HEK293 (cell line): ENCODE measurements at regions of chr1 and their contacts with region 1.

Region 1: DNA sequence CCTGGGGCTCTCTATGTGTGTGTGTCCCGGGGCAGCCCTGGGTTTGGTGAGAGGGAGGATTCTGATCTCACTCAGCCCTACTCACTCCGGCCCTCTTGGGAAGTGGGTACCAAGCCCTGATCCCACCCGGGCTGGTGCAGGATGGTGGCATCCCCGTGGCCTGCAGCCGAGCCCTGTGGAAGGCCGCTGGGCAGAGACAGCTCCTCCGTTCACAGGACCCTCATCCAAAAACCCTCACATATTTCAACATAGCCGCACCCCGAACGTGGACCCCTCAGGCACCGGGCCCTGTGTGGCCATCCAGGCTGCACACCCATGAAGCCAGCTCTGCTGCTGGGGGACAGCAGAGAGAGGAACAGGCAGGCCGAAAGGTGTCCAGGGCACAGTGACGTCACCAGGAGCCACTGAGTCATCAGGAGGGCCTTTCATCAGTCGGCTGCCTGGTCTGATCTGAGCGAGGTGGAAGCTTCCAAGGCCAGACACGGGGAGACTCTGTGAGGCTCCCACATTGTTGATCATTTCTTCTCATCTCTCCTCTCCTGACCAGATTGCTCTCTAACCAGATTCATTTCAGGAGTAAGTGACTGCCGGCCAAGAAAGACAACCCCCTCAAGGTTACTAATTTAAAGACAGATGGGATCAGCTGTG is 16.2 kb upstream of the GPR157 start:
- H3K4me3 ChIP-seq: no peak overlapping the region
- H3K27ac ChIP-seq: no peak overlapping the region
- H3K4me1 ChIP-seq: no peaks in the 10 kb centered on the region
- CTCF ChIP-seq: no peak

Region 2: GRCh38 chr1:9028921-9029705 is 116.0 kb before region 1 on chr1:
- CTCF ChIA-PET with region 1: no interaction called
- POLR2A ChIA-PET with region 1: no interaction called
- H3K4me3 ChIP-seq: no peak overlapping the region
- H3K27ac ChIP-seq: no peak overlapping the region
- H3K4me1 ChIP-seq: no peaks in the 10 kb centered on the region
- CTCF ChIP-seq: no peak

Region 3: GRCh38 chr1:9133870-9134585 is 11.1 kb before region 1 on chr1:
- CTCF ChIA-PET with region 1: interaction called, 26 read pairs
- POLR2A ChIA-PET with region 1: interaction called, 4 read pairs
- H3K4me3 ChIP-seq: no peak overlapping the region
- H3K27ac ChIP-seq: no peak overlapping the region
- H3K4me1 ChIP-seq: no peaks in the 10 kb centered on the region
- CTCF ChIP-seq: no peak

Region 4: DNA sequence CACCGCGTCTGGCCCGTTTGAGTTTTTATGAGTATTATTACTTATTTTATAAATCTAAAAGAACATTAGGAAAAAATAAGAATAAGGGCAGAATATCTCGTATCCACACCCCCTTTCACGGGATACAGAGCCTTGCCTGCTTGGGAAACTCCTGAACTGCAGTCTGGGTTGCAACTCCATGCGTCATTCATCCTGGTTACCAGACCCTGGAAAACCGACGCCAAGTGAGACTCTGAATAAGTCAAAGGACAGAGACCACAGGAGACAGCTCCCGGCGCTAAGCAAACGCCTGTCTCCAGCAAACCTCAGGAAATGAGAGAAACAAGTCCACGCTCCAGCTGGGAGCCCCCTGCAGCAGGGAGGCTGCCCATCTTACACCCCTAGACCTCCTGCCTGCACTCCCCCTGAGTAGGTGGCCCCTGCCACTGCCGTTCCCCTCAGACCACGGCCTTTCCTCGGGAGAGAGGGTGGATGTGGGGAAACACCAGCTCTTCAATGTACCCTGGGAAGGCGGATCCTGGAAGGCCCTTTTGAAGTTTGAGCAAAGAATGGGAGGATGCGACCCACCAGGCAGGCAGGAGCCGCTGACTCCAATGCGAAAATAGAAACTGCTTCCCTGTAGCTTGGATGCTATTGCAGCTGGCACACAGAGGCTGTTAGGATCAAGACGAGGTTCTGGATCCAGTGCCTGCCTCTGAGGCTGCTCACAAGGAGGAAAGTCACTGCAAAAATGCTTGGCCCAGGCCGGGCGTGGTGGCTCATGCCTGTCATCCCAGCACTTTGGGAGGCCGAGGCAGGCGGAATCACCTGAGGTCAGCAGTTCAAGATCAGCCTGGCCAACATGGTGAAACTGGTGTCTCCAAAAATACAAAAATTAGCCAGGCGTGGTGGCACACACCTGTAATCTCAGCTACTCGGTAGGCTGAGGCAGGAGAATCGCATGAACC is 21.4 kb after region 1 on chr1:
- CTCF ChIA-PET with region 1: interaction called, 13 read pairs
- POLR2A ChIA-PET with region 1: interaction called, 3 read pairs
- H3K4me3 ChIP-seq: no peak overlapping the region
- H3K27ac ChIP-seq: no peak overlapping the region
- H3K4me1 ChIP-seq: peaks cover 17% of the 10 kb centered on the region
- CTCF ChIP-seq: no peak

Region 5: GRCh38 chr1:9190234-9190633 is 45.1 kb after region 1 on chr1:
- CTCF ChIA-PET with region 1: interaction called, 57 read pairs
- POLR2A ChIA-PET with region 1: no interaction called
- H3K4me3 ChIP-seq: no peak overlapping the region
- H3K27ac ChIP-seq: no peak overlapping the region
- H3K4me1 ChIP-seq: 0 out of 2 replicates have a peak, but pooled peaks cover 2% of the 10 kb centered on the region
- CTCF ChIP-seq: no peak

Region 6: GRCh38 chr1:9201401-9202239 is 56.5 kb after region 1 on chr1:
- CTCF ChIA-PET with region 1: interaction called, 57 read pairs
- POLR2A ChIA-PET with region 1: interaction called, 3 read pairs
- H3K4me3 ChIP-seq: peak overlapping the region; percentile 60
- H3K27ac ChIP-seq: no peak overlapping the region
- H3K4me1 ChIP-seq: no peaks in the 10 kb centered on the region
- CTCF ChIP-seq: no peak

Region 7: DNA sequence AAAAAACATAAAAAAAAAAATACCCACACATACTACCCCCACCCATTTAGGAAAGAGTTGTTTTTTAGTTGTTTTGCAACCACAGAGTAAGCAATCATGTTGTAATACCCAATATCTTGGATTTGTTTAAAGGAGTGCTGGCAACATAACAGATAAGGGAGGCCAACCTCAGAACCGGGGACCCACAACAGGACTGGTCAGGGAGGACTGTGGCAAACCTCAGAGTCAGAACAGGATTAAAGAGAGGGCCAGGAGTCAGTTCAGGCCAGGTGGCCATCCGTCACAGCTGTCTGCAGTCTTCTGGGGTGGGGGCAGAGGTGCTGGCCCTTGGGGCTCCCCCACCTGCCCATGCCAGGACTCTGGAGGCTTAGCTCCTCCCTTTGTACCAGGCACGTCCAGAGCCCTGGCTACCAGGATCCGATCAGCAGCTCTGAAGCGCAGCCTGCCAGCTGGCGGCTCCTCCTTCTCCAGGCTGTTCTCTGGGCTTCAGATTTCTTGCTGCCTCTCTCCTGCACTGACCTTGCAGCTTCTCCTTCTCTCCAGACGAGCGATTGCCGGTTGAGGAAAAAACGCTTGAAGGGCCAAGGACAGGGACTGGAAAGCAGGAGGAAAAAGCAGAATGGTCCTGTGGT is 97.3 kb after region 1 on chr1:
- CTCF ChIA-PET with region 1: no interaction called
- POLR2A ChIA-PET with region 1: no interaction called
- H3K4me3 ChIP-seq: no peak overlapping the region
- H3K27ac ChIP-seq: no peak overlapping the region
- H3K4me1 ChIP-seq: no peaks in the 10 kb centered on the region
- CTCF ChIP-seq: no peak

Region 8: GRCh38 chr1:9280015-9280860 is 135.1 kb after region 1 on chr1:
- CTCF ChIA-PET with region 1: no interaction called
- POLR2A ChIA-PET with region 1: no interaction called
- H3K4me3 ChIP-seq: no peak overlapping the region
- H3K27ac ChIP-seq: no peak overlapping the region
- H3K4me1 ChIP-seq: peaks cover 6% of the 10 kb centered on the region; the same call in 1 of the 2 replicates
- CTCF ChIP-seq: no peak